Activated CD4-positive, alpha-beta T cell treated with anti-CD3 and anti-CD28 coated beads, Interleukin-2, amount 10 ng/mL, durations not matched to agents 24 days and 14 days (primary cell): ENCODE measurements at regions of chr2 and their contacts with region 1.

Region 1: GRCh38 chr2:175366815-175367214 is 185.3 kb upstream of the ATP5MC3 start:
- DNase-seq: peak; percentile 73
- H3K4me3 Mint-ChIP-seq: no peak overlapping the region
- H3K27ac Mint-ChIP-seq: no peak overlapping the region
- H3K4me1 Mint-ChIP-seq: no peaks in the 10 kb centered on the region
- H3K27me3 Mint-ChIP-seq: peaks cover 31% of the 10 kb centered on the region

Region 2: GRCh38 chr2:175478096-175478768 is 111.4 kb after region 1 on chr2:
- intact Hi-C with region 1: no loop called
- DNase-seq: no peak
- H3K4me3 Mint-ChIP-seq: no peak overlapping the region
- H3K27ac Mint-ChIP-seq: no peak overlapping the region
- H3K4me1 Mint-ChIP-seq: no peaks in the 10 kb centered on the region
- H3K27me3 Mint-ChIP-seq: no peaks in the 10 kb centered on the region

Region 3: DNA sequence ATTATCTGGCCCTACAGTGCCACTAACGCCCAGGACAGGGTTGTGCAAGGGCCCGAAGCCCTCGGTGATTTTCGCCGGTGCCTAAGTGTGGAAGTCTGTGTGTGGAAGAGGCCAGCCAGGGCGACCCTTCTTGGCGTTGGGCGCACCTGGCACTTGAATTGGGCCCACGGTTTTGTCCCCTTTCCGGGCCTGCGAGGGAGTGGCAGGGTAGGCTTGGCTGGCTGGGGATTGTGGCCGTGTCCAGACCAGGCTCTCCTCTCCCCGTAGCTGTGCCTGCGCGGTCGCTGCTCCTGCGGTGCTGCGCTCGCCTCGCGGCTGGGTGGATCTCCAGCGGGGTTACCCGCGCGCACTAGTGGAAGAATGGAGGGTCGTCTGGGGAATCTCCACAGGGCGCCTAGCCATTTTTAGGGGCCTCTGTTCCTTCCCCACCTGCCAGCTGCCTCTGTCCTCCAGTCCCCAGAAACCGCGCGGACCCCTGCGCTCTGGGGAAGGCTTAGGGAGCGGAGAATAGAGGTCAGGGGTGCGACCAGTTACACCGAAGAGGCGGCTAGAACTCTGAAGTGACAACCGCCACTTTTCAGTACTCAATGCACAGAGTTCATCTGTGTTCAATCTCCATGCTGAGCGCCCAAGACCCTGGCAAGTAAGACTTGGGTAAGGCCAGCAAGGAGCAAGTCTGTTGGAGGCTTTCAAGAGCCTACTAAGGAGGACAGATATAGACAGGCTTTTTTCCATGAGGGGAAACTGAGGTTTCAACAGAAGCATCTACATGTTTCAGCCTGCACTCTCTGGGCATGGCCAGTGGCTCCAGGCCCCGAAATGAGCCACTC is 701.0 kb after region 1 on chr2:
- intact Hi-C with region 1: loop called (anchors 10 kb)
- DNase-seq: no peak
- H3K4me3 Mint-ChIP-seq: no peak overlapping the region
- H3K27ac Mint-ChIP-seq: no peak overlapping the region
- H3K4me1 Mint-ChIP-seq: peaks cover 4% of the 10 kb centered on the region
- H3K27me3 Mint-ChIP-seq: peaks cover 77% of the 10 kb centered on the region

Region 4: DNA sequence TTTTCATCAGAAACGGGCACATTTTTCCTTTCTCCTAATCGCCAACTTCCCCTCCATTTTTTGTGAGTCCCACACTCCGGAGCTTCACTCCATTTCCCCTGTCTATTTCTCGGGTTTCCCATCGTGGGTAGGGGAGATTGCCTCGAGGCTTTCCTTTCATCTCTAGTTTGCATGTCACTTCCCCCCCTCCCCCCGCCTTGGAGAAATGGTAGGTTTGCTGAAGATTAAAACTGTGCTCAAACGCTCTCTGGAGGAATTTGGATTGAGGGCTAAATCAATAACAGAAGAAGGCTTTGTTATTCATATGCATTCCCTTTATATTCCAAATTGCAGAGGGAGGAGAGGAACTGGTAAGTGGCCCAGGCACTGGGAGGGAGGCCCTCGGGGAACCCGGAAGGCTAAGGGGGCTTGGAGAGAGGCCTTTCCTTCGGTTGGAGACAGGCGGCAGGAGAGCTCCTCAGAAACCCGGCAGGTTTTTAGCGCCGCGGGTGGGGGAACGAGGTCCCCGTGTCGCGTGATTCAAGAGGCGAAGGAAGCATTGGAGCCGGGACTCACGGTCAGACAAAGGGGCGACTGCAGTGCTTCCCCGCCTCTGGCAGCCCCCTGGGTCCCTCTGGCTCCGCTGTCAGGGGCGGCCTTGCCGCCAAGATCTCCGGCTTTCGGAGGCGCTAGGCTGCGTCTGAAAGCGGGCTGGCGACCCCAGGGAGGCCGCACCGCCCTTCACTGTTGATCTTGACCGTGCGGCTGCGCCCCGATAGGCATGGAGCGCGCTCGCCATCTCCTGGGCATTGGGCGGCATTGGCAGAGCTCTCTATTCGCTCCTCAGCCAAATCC is 730.4 kb after region 1 on chr2:
- intact Hi-C with region 1: loop called (anchors 5 kb)
- DNase-seq: peak; percentile 85
- H3K4me3 Mint-ChIP-seq: peak overlapping the region; percentile 81
- H3K27ac Mint-ChIP-seq: no peak overlapping the region
- H3K4me1 Mint-ChIP-seq: peaks cover 13% of the 10 kb centered on the region
- H3K27me3 Mint-ChIP-seq: peaks cover 83% of the 10 kb centered on the region